ENCODE measurements at regions of chr2 and their contacts with region 1.

Region 1: GRCh38 chr2:177552422-177553175 is 160.0 kb downstream of the AGPS start:
- DNase-seq: peak; percentile 92
- H3K4me3 ChIP-seq: peak overlapping the region; percentile 48 to 74 (median 67)
- H3K27ac ChIP-seq: peak overlapping the region; percentile 88 to 94 (median 92)
- H3K4me1 ChIP-seq: peaks cover 0 to 29% (median 6%) of the 10 kb centered on the region in 4 donors
- H3K27me3 ChIP-seq: no peaks in the 10 kb centered on the region
- CTCF ChIP-seq: no peak
- EP300 ChIP-seq: no peak
- POLR2A ChIP-seq: no peak

Region 2: DNA sequence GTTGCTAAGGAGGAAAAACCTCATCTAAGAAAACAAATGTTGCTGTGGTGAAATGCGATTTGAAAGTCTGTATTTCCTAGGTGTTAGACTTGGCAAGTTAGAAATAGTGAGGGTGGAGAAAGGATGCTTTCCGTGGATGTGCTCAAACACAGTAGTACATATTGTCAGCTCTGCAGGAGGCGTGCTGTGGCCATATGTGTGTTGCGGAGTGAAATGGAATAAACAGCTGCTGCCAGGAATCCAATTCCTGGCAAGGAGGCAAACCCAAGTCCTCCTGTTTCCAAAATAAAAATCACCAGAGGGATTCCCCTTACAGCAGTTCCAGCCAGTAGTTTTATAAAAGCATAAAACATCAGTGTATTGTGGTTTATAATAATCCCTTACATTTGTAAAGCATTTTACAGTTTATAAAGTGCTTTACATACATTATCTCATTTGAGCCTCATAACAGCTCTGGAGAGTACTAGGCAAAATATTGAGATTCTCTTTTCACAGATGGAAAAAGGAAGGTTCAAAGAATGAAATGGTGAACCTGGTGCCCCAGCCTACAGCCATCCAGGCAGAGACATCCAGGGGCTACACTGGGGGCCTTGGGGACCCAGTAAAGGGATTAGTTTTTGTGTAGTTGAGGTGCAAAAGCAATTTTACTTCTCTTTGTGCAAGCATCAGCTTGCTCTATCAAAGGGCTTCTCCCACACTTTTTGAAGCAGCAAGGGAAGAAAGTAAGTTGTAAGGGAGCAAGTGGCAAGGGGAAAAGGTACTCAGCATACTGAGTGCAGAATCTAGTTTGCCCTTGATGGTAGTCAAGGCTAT is 45.9 kb after region 1 on chr2:
- intact Hi-C with region 1: loop called (anchors 5 kb)
- DNase-seq: peak; percentile 77
- H3K4me3 ChIP-seq: peak overlapping the region in 1 of 4 donors; percentile 8
- H3K27ac ChIP-seq: peak overlapping the region in 3 of 4 donors; percentile 54 to 65 (median 56)
- H3K4me1 ChIP-seq: peaks cover 0 to 33% (median 21%) of the 10 kb centered on the region in 4 donors
- H3K27me3 ChIP-seq: no peaks in the 10 kb centered on the region
- CTCF ChIP-seq: no peak
- EP300 ChIP-seq: no peak
- POLR2A ChIP-seq: no peak

Region 3: GRCh38 chr2:177618255-177619253 is 66.0 kb after region 1 on chr2:
- intact Hi-C with region 1: loop called (anchors 5 kb)
- DNase-seq: peak; percentile 95
- H3K4me3 ChIP-seq: peak overlapping the region; percentile 54 to 75 (median 69)
- H3K27ac ChIP-seq: peak overlapping the region; percentile 79 to 95 (median 92)
- H3K4me1 ChIP-seq: peaks cover 0 to 8% (median 6%) of the 10 kb centered on the region in 4 donors
- H3K27me3 ChIP-seq: no peaks in the 10 kb centered on the region
- CTCF ChIP-seq: no peak
- EP300 ChIP-seq: no peak
- POLR2A ChIP-seq: no peak

Measured in sigmoid colon (tissue), 7 donors.